CD4-positive, alpha-beta memory T cell (primary cell): ENCODE measurements at regions of chr3 and their contacts with region 1.

Region 1: DNA sequence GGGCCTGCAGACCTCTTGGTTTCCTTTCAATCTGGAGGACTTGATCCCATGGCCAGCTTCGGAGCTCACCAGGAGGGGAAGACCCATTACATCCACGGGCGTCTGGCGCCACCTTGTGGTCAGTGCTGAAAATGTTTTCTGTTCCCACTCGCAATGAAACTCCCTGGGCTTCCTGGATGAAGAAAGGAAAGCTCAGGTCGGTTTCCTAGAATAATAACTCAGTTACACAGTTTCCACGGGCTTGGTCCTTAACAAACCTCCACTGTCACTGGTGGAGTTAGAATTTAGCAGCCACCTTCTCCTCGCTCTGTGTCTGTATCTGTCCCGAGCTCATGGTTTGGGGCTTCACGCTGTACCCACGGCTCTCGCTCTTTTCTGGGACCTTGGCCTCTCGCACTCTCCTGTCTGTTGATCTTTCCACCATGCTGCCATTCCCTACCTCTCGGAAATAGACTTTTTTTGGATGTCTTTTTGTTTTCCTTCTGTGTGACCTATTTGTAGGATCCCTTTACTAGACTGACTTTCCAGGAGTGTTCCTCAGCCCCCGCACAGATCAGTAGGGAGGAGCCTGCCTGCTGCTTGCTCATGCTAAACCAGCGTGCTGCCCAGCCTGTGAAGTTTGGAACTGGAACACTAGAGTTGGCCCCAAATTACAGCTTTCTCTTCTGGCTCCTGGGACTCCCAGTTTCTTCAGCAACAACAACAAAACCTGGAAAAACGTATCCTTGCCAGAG is 56.3 kb downstream of the IL20RB start:
- DNase-seq: peak; percentile 73 to 81 (median 75)
- H3K4me3 ChIP-seq: peak overlapping the region in 1 of 2 donors; percentile 3
- H3K4me3 Mint-ChIP-seq: peak overlapping the region; percentile 65 to 89 (median 78)
- H3K27ac ChIP-seq: no peak overlapping the region
- H3K27ac Mint-ChIP-seq: peak overlapping the region in 4 of 7 donors; percentile 23 to 77 (median 38)
- H3K4me1 ChIP-seq: no peaks in the 10 kb centered on the region
- H3K4me1 Mint-ChIP-seq: peaks cover 5 to 12% (median 7%) of the 10 kb centered on the region in 4 donors
- H3K27me3 ChIP-seq: no peaks in the 10 kb centered on the region
- H3K27me3 Mint-ChIP-seq: no peaks in the 10 kb centered on the region

Region 2: DNA sequence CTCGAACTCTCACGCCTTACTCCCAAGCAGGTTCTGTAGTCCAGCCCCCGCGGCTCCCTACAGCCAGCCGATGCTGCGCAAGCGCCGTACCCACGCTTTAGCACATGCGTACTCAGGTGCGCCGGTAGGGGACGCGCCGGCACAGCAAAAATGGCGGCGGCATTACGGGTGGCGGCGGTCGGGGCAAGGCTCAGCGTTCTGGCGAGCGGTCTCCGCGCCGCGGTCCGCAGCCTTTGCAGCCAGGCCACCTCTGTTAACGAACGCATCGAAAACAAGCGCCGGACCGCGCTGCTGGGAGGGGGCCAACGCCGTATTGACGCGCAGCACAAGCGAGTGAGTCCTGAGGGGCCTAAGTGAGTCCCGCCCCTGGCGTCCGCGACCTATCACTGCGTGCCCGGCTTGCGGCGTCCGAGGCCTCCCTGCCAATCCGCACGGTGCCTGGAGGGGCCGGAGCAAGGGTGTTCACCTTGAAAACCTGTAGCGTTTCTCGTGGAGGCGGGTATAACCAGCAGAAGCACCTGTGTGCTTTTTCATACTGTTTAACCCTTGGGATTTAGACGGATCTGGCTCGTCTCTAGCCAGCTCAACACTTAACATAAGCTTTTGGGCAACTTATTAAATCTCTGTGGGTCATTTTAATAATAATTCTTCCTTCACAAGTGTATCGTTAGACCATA is 763.8 kb before region 1 on chr3 and contains the start of gene PCCB:
- CTCF ChIA-PET with region 1: interaction called, 4 read pairs
- POLR2A ChIA-PET with region 1: no interaction called
- intact Hi-C with region 1: loop called (anchors 1 kb)
- DNase-seq: peak; percentile 93 to 96 (median 94)
- H3K4me3 ChIP-seq: peak within 1 kb of the TSS; percentile 43 to 77
- H3K4me3 Mint-ChIP-seq: peak within 1 kb of the TSS; percentile 85 to 93 (median 90)
- H3K27ac ChIP-seq: peak within 1 kb of the TSS; percentile 75
- H3K27ac Mint-ChIP-seq: peak within 1 kb of the TSS; percentile 75 to 94 (median 90)
- H3K4me1 ChIP-seq: peaks cover 17% of the 10 kb centered on the region
- H3K4me1 Mint-ChIP-seq: peaks cover 15 to 27% (median 20%) of the 10 kb centered on the region in 4 donors
- H3K27me3 ChIP-seq: no peaks in the 10 kb centered on the region
- H3K27me3 Mint-ChIP-seq: no peaks in the 10 kb centered on the region
- total RNA-seq, gene PCCB: 12.1 to 12.4 TPM

Region 3: DNA sequence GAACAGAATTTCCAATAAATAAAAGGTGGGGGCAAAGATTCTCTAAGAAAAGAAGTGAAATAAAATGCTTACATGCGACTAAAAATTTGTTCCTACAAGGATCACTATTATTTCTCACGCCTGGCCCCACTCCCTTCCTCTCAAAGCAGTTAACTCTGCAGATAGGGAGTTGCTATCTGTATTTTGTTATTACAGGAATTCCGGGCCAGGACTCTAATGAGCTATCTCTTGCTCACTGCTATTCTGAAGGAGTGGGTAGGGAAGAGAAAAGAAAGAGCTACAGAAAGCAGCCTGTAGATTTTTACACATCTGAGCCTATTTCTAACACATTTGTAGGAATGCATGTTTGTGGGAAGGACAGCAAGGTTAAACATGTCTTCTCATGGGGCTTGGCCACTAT is 623.5 kb before region 1 on chr3:
- CTCF ChIA-PET with region 1: interaction called, 70 read pairs
- POLR2A ChIA-PET with region 1: interaction called, 5 read pairs
- intact Hi-C with region 1: loop called (anchors 1 kb)
- DNase-seq: no peak
- H3K4me3 ChIP-seq: no peak overlapping the region
- H3K4me3 Mint-ChIP-seq: no peak overlapping the region
- H3K27ac ChIP-seq: no peak overlapping the region
- H3K27ac Mint-ChIP-seq: no peak overlapping the region
- H3K4me1 ChIP-seq: no peaks in the 10 kb centered on the region
- H3K4me1 Mint-ChIP-seq: peaks cover 0 to 2% (median 0%) of the 10 kb centered on the region in 4 donors
- H3K27me3 ChIP-seq: no peaks in the 10 kb centered on the region
- H3K27me3 Mint-ChIP-seq: no peaks in the 10 kb centered on the region

Region 4: DNA sequence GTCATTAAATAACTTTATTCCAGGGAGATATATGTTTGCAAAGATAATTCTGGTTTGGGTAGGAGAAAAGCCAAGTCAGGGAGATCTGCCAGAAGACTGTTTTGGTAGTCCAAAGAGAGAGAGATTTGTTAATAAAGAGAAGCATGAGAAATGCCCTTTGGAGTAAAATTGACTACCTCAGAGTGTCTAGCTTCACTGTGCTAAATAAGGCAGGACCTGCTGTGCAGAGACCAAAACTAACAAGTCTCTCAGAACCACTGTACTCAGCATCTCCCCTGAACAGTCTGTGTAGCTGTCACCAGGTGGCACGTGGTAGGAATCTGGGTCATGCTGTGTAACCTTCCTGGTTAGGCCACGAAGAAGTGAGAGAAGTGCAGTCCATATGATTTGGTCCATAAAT is 226.8 kb before region 1 on chr3:
- CTCF ChIA-PET with region 1: interaction called, 11 read pairs
- POLR2A ChIA-PET with region 1: no interaction called
- intact Hi-C with region 1: no loop called
- DNase-seq: peak; percentile 3 to 42 (median 26)
- H3K4me3 ChIP-seq: no peak overlapping the region
- H3K4me3 Mint-ChIP-seq: no peak overlapping the region
- H3K27ac ChIP-seq: no peak overlapping the region
- H3K27ac Mint-ChIP-seq: peak overlapping the region in 2 of 7 donors; percentile 8 to 67
- H3K4me1 ChIP-seq: peaks cover 9% of the 10 kb centered on the region
- H3K4me1 Mint-ChIP-seq: peaks cover 5 to 10% (median 8%) of the 10 kb centered on the region in 4 donors
- H3K27me3 ChIP-seq: no peaks in the 10 kb centered on the region
- H3K27me3 Mint-ChIP-seq: no peaks in the 10 kb centered on the region

Region 5: GRCh38 chr3:136919799-136920580 is 94.1 kb before region 1 on chr3:
- CTCF ChIA-PET with region 1: interaction called, 4 read pairs
- POLR2A ChIA-PET with region 1: no interaction called
- intact Hi-C with region 1: loop called (anchors 5 kb)
- DNase-seq: peak; percentile 64 to 78 (median 69)
- H3K4me3 ChIP-seq: no peak overlapping the region
- H3K4me3 Mint-ChIP-seq: peak overlapping the region; percentile 25 to 91 (median 74)
- H3K27ac ChIP-seq: peak overlapping the region; percentile 55
- H3K27ac Mint-ChIP-seq: peak overlapping the region; percentile 81 to 95 (median 86)
- H3K4me1 ChIP-seq: peaks cover 93% of the 10 kb centered on the region
- H3K4me1 Mint-ChIP-seq: peaks cover 64 to 90% (median 77%) of the 10 kb centered on the region in 4 donors
- H3K27me3 ChIP-seq: no peaks in the 10 kb centered on the region
- H3K27me3 Mint-ChIP-seq: no peaks in the 10 kb centered on the region

Region 6: GRCh38 chr3:137032465-137033120 is 18.5 kb after region 1 on chr3:
- CTCF ChIA-PET with region 1: interaction called, 16 read pairs
- POLR2A ChIA-PET with region 1: no interaction called
- intact Hi-C with region 1: no loop called
- DNase-seq: peak; percentile 37 to 67 (median 49)
- H3K4me3 ChIP-seq: peak overlapping the region in 1 of 2 donors; percentile 11
- H3K4me3 Mint-ChIP-seq: peak overlapping the region; percentile 71 to 85 (median 76)
- H3K27ac ChIP-seq: no peak overlapping the region
- H3K27ac Mint-ChIP-seq: no peak overlapping the region
- H3K4me1 ChIP-seq: peaks cover 5% of the 10 kb centered on the region
- H3K4me1 Mint-ChIP-seq: peaks cover 4 to 9% (median 7%) of the 10 kb centered on the region in 4 donors
- H3K27me3 ChIP-seq: no peaks in the 10 kb centered on the region
- H3K27me3 Mint-ChIP-seq: peaks cover 18 to 19% of the 10 kb centered on the region in 2 donors